HepG2 (cell line): ENCODE measurements at regions of chr2 and their contacts with region 1.

Region 1: DNA sequence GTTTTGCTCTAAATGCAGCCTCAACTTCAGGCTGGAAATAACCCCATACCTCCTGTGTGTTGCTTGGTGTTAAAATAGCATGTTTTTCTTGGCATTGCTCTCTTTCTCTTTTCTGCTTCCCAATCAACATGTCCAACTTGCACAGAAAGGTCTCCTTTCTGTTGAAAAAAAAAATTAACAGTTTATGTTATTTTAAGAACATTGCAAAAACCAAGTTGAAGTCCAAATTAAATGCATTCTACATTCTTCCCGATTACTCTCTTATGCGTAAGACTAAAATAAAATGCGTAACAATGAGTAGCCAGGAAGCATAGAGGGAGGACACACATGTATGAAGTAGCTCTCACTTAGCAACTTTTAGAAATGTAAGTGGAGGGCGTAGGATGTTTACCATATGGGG is 1406.1 kb upstream of the NXPH2 start:
- DNase-seq: no peak
- ATAC-seq: no peak
- H3K4me3 ChIP-seq: no peak overlapping the region
- H3K27ac ChIP-seq: no peak overlapping the region
- H3K4me1 ChIP-seq: no peaks in the 10 kb centered on the region
- H3K27me3 ChIP-seq: no peaks in the 10 kb centered on the region
- CTCF ChIP-seq: no peak
- EP300 ChIP-seq: no peak
- POLR2A ChIP-seq: no peak
- RAD21 ChIP-seq: no peak

Region 2: DNA sequence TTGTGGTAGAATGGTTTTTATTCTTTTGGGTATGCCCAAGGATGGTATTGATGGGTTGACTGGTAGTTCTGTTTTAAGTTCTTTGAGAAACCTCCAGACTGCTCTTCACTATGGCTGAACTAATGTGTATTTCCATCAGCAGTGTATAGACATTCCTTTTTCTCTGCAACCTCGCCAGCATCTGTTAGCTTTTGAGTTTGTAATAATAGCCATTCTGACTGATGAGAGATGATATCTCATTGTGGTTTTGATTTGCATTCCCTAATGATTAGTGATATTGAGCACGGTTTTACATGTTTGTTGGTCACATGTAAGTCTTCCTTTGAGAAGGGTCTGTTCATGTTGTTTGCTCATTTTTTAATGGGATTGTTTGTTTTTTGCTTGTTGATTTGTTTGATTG is 57.4 kb before region 1 on chr2:
- CTCF ChIA-PET with region 1: no interaction called
- POLR2A ChIA-PET with region 1: no interaction called
- in situ Hi-C with region 1: no loop called
- intact Hi-C with region 1: no loop called
- DNase-seq: no peak
- ATAC-seq: no peak
- H3K4me3 ChIP-seq: no peak overlapping the region
- H3K27ac ChIP-seq: no peak overlapping the region
- H3K4me1 ChIP-seq: no peaks in the 10 kb centered on the region
- H3K27me3 ChIP-seq: no peaks in the 10 kb centered on the region
- CTCF ChIP-seq: no peak
- EP300 ChIP-seq: no peak
- POLR2A ChIP-seq: no peak
- RAD21 ChIP-seq: no peak

Region 3: GRCh38 chr2:140173790-140174189 is 12.5 kb before region 1 on chr2:
- CTCF ChIA-PET with region 1: no interaction called
- POLR2A ChIA-PET with region 1: no interaction called
- in situ Hi-C with region 1: no loop called
- intact Hi-C with region 1: loop called (anchors 1 kb)
- DNase-seq: no peak
- ATAC-seq: no peak
- H3K4me3 ChIP-seq: no peak overlapping the region
- H3K27ac ChIP-seq: no peak overlapping the region
- H3K4me1 ChIP-seq: no peaks in the 10 kb centered on the region
- H3K27me3 ChIP-seq: no peaks in the 10 kb centered on the region
- CTCF ChIP-seq: no peak
- EP300 ChIP-seq: no peak
- POLR2A ChIP-seq: no peak
- RAD21 ChIP-seq: no peak

Region 4: GRCh38 chr2:141399270-141399669 is 1213.0 kb after region 1 on chr2:
- CTCF ChIA-PET with region 1: no interaction called
- POLR2A ChIA-PET with region 1: no interaction called
- in situ Hi-C with region 1: no loop called
- intact Hi-C with region 1: no loop called
- DNase-seq: peak; percentile 12
- ATAC-seq: peak; percentile 88
- H3K4me3 ChIP-seq: no peak overlapping the region
- H3K27ac ChIP-seq: no peak overlapping the region
- H3K4me1 ChIP-seq: no peaks in the 10 kb centered on the region
- H3K27me3 ChIP-seq: no peaks in the 10 kb centered on the region
- CTCF ChIP-seq: peak; percentile 42
- EP300 ChIP-seq: no peak
- POLR2A ChIP-seq: no peak
- RAD21 ChIP-seq: no peak